Transverse colon (tissue), 4 donors: ENCODE measurements at regions of chr5 and their contacts with region 1.

Region 1: GRCh38 chr5:90434116-90434714 is 24.7 kb upstream of the CETN3 start:
- DNase-seq: peak; percentile 46
- H3K4me3 ChIP-seq: no peak overlapping the region
- H3K27ac ChIP-seq: no peak overlapping the region
- H3K4me1 ChIP-seq: no peaks in the 10 kb centered on the region
- H3K27me3 ChIP-seq: no peaks in the 10 kb centered on the region
- CTCF ChIP-seq: peak; percentile 34 to 51 (median 48)
- EP300 ChIP-seq: no peak
- POLR2A ChIP-seq: no peak

Region 2: DNA sequence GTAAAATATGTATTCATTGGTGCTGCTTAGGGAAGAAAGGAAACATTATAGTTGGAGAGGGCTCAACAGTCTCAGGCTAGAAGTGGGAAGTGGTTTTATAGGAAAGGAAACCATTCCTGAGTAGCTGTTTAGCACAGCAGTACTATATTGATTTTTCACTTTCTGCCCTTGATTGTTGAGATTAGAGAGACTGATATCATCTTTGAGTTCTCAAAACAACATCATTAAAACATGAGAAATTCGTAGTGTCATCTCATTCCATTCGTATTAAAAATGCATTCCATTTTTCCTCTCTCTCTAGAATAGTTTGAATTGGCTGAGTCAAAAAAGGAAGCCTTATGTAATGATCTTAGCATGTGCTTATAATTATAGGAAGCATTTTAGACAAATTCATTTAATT is 54.6 kb after region 1 on chr5:
- in situ Hi-C with region 1: no loop called
- intact Hi-C with region 1: loop called (anchors 2 kb)
- DNase-seq: no peak
- H3K4me3 ChIP-seq: no peak overlapping the region
- H3K27ac ChIP-seq: no peak overlapping the region
- H3K4me1 ChIP-seq: no peaks in the 10 kb centered on the region
- H3K27me3 ChIP-seq: no peaks in the 10 kb centered on the region
- CTCF ChIP-seq: no peak
- EP300 ChIP-seq: no peak
- POLR2A ChIP-seq: no peak

Region 3: DNA sequence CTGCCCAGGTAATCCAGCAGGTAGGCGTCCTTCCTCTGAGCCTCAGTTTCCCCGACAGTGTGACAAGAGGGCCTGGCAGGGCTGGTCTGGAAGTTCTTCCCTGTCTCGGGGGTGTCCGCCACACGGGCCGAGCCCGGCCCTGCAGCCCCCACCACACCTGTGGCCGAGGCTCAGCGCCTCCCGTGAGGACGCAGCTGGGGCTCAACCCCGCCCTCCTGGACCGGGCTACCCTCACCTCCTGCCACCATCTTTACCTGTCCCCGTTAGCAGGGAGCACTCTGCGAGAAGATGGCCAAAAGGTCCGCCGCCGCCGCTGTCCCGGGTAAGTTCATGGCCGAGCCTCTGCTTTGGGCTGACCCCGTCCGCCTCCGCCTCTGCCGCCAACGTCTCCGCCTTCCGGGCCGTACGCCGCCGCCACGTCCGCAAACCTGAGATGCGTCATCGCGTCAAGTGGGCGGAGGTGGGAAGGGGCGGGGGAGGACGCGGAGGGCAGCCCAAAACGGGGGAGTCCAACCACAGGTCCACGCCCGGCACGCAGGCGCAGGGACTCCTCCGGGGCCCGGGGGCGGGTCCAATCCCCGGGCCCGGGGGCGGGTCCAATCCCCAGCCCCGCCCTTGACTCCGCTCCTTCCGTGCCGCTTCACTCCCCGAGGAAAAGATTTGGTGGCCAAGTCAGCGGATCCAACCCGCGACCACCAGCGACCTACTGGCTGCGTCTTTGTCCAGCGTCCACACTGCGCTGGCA is 95.2 kb after region 1 on chr5 and contains the start of gene LYSMD3:
- in situ Hi-C with region 1: loop called in 1 of 4 experiments (anchors 25 kb)
- intact Hi-C with region 1: loop called (anchors 10 kb)
- DNase-seq: peak; percentile 99
- H3K4me3 ChIP-seq: peak within 1 kb of the TSS; percentile 80 to 89 (median 86)
- H3K27ac ChIP-seq: peak within 1 kb of the TSS; percentile 90 to 96 (median 92)
- H3K4me1 ChIP-seq: peaks cover 0 to 41% (median 32%) of the 10 kb centered on the region in 4 donors
- H3K27me3 ChIP-seq: no peaks in the 10 kb centered on the region
- CTCF ChIP-seq: no peak
- EP300 ChIP-seq: no peak
- POLR2A ChIP-seq: peak; percentile 95
- total RNA-seq, gene LYSMD3: 5.6 to 23.0 (median 12.8) TPM

Region 4: DNA sequence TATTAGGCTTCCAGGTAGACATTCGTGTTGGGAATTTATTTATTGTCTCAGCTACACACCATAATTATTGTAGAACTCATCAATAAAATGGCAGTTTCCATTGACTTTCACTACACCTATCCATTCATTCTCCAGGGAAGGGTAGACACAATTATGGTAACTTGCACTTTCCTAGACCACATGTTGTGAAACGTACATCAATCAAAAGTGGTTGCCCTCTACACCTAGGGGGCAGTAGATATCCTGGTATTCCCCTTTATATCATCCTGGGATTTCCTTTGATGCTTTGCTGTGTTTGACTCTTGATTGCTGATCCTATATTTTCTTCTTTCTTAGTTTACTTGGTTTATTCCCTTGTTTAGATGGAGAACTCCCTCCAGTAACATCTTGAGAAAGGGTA is 172.3 kb after region 1 on chr5:
- in situ Hi-C with region 1: loop called in 1 of 4 experiments (anchors 10 kb)
- intact Hi-C with region 1: no loop called
- DNase-seq: no peak
- H3K4me3 ChIP-seq: no peak overlapping the region
- H3K27ac ChIP-seq: no peak overlapping the region
- H3K4me1 ChIP-seq: peaks cover 0 to 4% (median 1%) of the 10 kb centered on the region in 4 donors
- H3K27me3 ChIP-seq: no peaks in the 10 kb centered on the region
- CTCF ChIP-seq: peak in 1 of 5 experiments; percentile 26
- EP300 ChIP-seq: no peak
- POLR2A ChIP-seq: no peak

Region 5: DNA sequence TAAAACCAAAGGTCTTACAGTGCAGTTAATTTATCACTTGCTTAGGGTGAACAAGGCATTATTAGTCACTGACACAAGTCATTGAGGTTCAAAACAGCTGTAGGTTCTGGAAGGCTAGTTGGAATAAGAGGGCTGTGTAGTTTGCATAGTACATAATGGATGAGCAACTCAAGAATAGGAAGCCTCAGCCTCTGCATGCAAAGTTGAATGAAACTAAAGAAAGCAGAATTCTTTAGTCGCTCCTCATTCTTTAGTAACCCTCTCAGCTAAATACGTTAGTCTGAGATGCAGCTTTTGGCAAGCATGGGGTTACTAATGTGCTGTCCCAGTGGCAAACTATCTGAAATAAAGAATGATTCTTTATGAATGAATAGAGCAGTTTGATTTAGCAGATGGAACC is 198.6 kb after region 1 on chr5:
- in situ Hi-C with region 1: no loop called
- intact Hi-C with region 1: no loop called
- DNase-seq: no peak
- H3K4me3 ChIP-seq: no peak overlapping the region
- H3K27ac ChIP-seq: no peak overlapping the region
- H3K4me1 ChIP-seq: no peaks in the 10 kb centered on the region
- H3K27me3 ChIP-seq: no peaks in the 10 kb centered on the region
- CTCF ChIP-seq: no peak
- EP300 ChIP-seq: no peak
- POLR2A ChIP-seq: no peak

Region 6: GRCh38 chr5:90783460-90784333 is 349.5 kb after region 1 on chr5:
- in situ Hi-C with region 1: loop called in 2 of 4 experiments (anchors 25 kb)
- intact Hi-C with region 1: no loop called
- DNase-seq: peak; percentile 73
- H3K4me3 ChIP-seq: no peak overlapping the region
- H3K27ac ChIP-seq: no peak overlapping the region
- H3K4me1 ChIP-seq: no peaks in the 10 kb centered on the region
- H3K27me3 ChIP-seq: no peaks in the 10 kb centered on the region
- CTCF ChIP-seq: peak; percentile 61 to 85 (median 82)
- EP300 ChIP-seq: no peak
- POLR2A ChIP-seq: no peak